Transverse colon (tissue), 4 donors: ENCODE measurements at regions of chr4 and their contacts with region 1.

Region 1: GRCh38 chr4:88211473-88212252 is 53.2 kb upstream of the ABCG2 start:
- DNase-seq: peak; percentile 20
- H3K4me3 ChIP-seq: no peak overlapping the region
- H3K27ac ChIP-seq: no peak overlapping the region
- H3K4me1 ChIP-seq: peaks cover 0 to 3% (median 0%) of the 10 kb centered on the region in 4 donors
- H3K27me3 ChIP-seq: no peaks in the 10 kb centered on the region
- CTCF ChIP-seq: peak; percentile 68 to 80 (median 74)
- EP300 ChIP-seq: no peak
- POLR2A ChIP-seq: no peak

Region 2: DNA sequence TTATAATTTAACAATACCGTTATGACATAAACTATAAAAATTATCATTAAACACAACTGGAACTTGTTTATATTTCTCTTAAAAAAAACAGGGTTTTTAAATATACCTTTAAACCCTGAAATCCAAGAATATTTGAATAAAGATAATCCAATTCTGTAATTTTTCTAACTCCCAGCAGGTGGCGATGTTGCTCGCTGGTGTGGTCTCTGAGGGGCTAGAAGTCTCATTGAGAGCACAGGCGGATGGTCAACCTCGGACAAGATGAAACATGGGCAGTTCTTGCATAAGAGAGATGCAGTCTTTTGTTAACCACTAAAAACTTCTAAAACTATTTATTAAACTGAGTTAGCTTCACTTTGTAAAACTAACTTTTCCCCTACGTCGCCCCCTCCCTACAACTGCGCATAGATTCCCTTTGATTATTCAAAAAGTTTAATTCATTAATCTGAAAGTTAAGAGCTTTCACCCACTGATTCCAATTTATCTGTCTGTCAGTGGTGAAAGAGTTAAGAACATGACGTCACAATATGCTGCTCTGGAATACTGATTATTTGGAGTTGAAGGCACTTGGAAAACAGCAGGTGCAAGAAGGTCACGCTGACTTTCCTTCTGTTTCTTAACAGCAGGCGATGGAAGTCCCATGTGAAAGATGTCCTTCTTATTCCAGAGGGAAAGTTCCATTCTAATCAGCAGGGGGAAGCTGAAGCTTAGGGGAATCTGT is 532.1 kb before region 1 on chr4:
- in situ Hi-C with region 1: loop called in 3 of 4 experiments (anchors 25 kb)
- intact Hi-C with region 1: loop called (anchors 10 kb)
- DNase-seq: peak; percentile 19
- H3K4me3 ChIP-seq: no peak overlapping the region
- H3K27ac ChIP-seq: no peak overlapping the region
- H3K4me1 ChIP-seq: no peaks in the 10 kb centered on the region
- H3K27me3 ChIP-seq: no peaks in the 10 kb centered on the region
- CTCF ChIP-seq: peak; percentile 52 to 77 (median 67)
- EP300 ChIP-seq: no peak
- POLR2A ChIP-seq: no peak

Region 3: DNA sequence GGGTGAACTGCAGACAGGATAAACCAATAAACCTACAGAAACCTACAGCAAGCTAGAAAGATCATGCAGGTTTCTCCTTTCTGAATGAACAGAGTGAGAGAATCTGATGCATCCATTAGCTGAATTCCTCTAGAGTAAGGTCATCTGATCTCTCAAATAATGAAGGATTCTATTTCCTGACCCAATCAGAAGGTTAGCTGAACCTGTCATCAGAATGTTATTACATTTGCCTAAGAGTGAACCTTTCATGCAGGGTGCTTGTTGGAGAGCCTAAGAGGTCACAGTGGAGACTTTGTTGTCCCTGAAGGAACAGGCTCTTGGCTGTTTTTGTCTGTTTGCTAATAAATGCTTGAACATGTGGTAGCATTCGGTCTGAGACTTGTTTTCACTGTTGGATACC is 354.8 kb before region 1 on chr4:
- in situ Hi-C with region 1: loop called (anchors 10 to 25 kb)
- intact Hi-C with region 1: loop called (anchors 2 kb)
- DNase-seq: no peak
- H3K4me3 ChIP-seq: no peak overlapping the region
- H3K27ac ChIP-seq: no peak overlapping the region
- H3K4me1 ChIP-seq: no peaks in the 10 kb centered on the region
- H3K27me3 ChIP-seq: no peaks in the 10 kb centered on the region
- CTCF ChIP-seq: no peak
- EP300 ChIP-seq: no peak
- POLR2A ChIP-seq: no peak

Region 4: GRCh38 chr4:87985097-87985886 is 226.4 kb before region 1 on chr4:
- in situ Hi-C with region 1: no loop called
- intact Hi-C with region 1: loop called (anchors 5 kb)
- DNase-seq: peak; percentile 44
- H3K4me3 ChIP-seq: no peak overlapping the region
- H3K27ac ChIP-seq: no peak overlapping the region
- H3K4me1 ChIP-seq: no peaks in the 10 kb centered on the region
- H3K27me3 ChIP-seq: no peaks in the 10 kb centered on the region
- CTCF ChIP-seq: peak in 4 of 5 experiments; percentile 14 to 46 (median 34)
- EP300 ChIP-seq: no peak
- POLR2A ChIP-seq: no peak

Region 5: GRCh38 chr4:88027611-88028608 is 183.8 kb before region 1 on chr4:
- in situ Hi-C with region 1: loop called (anchors 5 to 10 kb)
- intact Hi-C with region 1: loop called (anchors 5 kb)
- DNase-seq: no peak
- H3K4me3 ChIP-seq: no peak overlapping the region
- H3K27ac ChIP-seq: peak overlapping the region in 2 of 4 donors; percentile 12 to 62
- H3K4me1 ChIP-seq: peaks cover 0 to 11% (median 0%) of the 10 kb centered on the region in 4 donors
- H3K27me3 ChIP-seq: no peaks in the 10 kb centered on the region
- CTCF ChIP-seq: no peak
- EP300 ChIP-seq: no peak
- POLR2A ChIP-seq: no peak

Region 6: GRCh38 chr4:88033309-88033708 is 178.4 kb before region 1 on chr4:
- in situ Hi-C with region 1: loop called (anchors 5 to 10 kb)
- intact Hi-C with region 1: loop called (anchors 5 kb)
- DNase-seq: peak; percentile 25
- H3K4me3 ChIP-seq: no peak overlapping the region
- H3K27ac ChIP-seq: no peak overlapping the region
- H3K4me1 ChIP-seq: peaks cover 0 to 3% (median 0%) of the 10 kb centered on the region in 4 donors
- H3K27me3 ChIP-seq: no peaks in the 10 kb centered on the region
- CTCF ChIP-seq: peak; percentile 63 to 70 (median 65)
- EP300 ChIP-seq: no peak
- POLR2A ChIP-seq: no peak

Region 7: GRCh38 chr4:88352062-88352740 is 140.5 kb after region 1 on chr4:
- in situ Hi-C with region 1: no loop called
- intact Hi-C with region 1: no loop called
- DNase-seq: no peak
- H3K4me3 ChIP-seq: no peak overlapping the region
- H3K27ac ChIP-seq: no peak overlapping the region
- H3K4me1 ChIP-seq: no peaks in the 10 kb centered on the region
- H3K27me3 ChIP-seq: no peaks in the 10 kb centered on the region
- CTCF ChIP-seq: no peak
- EP300 ChIP-seq: no peak
- POLR2A ChIP-seq: no peak

Region 8: GRCh38 chr4:89158884-89159503 is 947.3 kb after region 1 on chr4:
- in situ Hi-C with region 1: no loop called
- intact Hi-C with region 1: no loop called
- DNase-seq: no peak
- H3K4me3 ChIP-seq: no peak overlapping the region
- H3K27ac ChIP-seq: no peak overlapping the region
- H3K4me1 ChIP-seq: no peaks in the 10 kb centered on the region
- H3K27me3 ChIP-seq: no peaks in the 10 kb centered on the region
- CTCF ChIP-seq: peak; percentile 72 to 80 (median 74)
- EP300 ChIP-seq: no peak
- POLR2A ChIP-seq: no peak